PC-9 (cell line): ENCODE measurements at regions of chr11 and their contacts with region 1.

Region 1: DNA sequence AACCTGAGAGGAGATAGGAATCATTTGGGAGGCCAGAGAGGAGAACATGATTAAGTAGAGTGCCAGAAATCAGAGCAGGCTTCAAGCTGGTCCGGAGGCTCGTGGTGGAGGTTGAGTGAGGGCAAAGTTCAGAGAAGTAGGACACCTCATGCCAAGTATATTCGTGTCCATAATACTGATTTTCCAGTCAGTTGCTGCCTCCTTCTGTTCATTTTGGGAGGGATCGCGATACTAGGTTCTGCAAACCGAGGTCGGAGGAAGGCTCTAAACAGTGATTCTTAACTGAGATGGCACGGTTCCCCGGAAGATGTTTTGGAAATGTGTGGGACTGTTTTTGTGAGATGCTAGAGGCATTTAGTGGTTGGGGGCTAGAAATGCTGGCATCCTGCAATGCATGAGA is 13.6 kb upstream of the CD3E start:
- DNase-seq: peak; percentile 43 to 65
- H3K4me3 ChIP-seq: no peak overlapping the region
- H3K27ac ChIP-seq: no peak overlapping the region
- H3K4me1 ChIP-seq: peaks cover 33% of the 10 kb centered on the region
- H3K27me3 ChIP-seq: no peaks in the 10 kb centered on the region
- CTCF ChIP-seq: peak; percentile 68

Region 2: GRCh38 chr11:118198370-118198769 is 92.6 kb before region 1 on chr11:
- CTCF ChIA-PET with region 1: interaction called, 14 read pairs
- POLR2A ChIA-PET with region 1: no interaction called
- intact Hi-C with region 1: loop called (anchors 1 kb)
- DNase-seq: peak in 1 of 2 experiments; percentile 74
- H3K4me3 ChIP-seq: peak overlapping the region; percentile 44; the same call in 1 of the 2 replicates
- H3K27ac ChIP-seq: no peak overlapping the region
- H3K4me1 ChIP-seq: peaks cover 16% of the 10 kb centered on the region
- H3K27me3 ChIP-seq: no peaks in the 10 kb centered on the region
- CTCF ChIP-seq: peak; percentile 98

Region 3: GRCh38 chr11:118251858-118252652 is 38.9 kb before region 1 on chr11 and contains the start of gene MPZL3:
- CTCF ChIA-PET with region 1: no interaction called
- POLR2A ChIA-PET with region 1: no interaction called
- intact Hi-C with region 1: loop called (anchors 2 kb)
- DNase-seq: peak; percentile 86 to 99
- H3K4me3 ChIP-seq: peak within 1 kb of the TSS; percentile 72
- H3K27ac ChIP-seq: peak within 1 kb of the TSS; percentile 88
- H3K4me1 ChIP-seq: peaks cover 32% of the 10 kb centered on the region
- H3K27me3 ChIP-seq: no peaks in the 10 kb centered on the region
- CTCF ChIP-seq: 0 out of 2 replicates have a peak, but pooled peaks have one; percentile 2
- total RNA-seq, gene MPZL3: 13.4 and 16.8 TPM in 2 replicates

Region 4: GRCh38 chr11:118353084-118353710 is 62.3 kb after region 1 on chr11:
- CTCF ChIA-PET with region 1: no interaction called
- POLR2A ChIA-PET with region 1: no interaction called
- intact Hi-C with region 1: loop called (anchors 1 kb)
- DNase-seq: no peak
- H3K4me3 ChIP-seq: no peak overlapping the region
- H3K27ac ChIP-seq: no peak overlapping the region
- H3K4me1 ChIP-seq: peaks cover 21% of the 10 kb centered on the region
- H3K27me3 ChIP-seq: no peaks in the 10 kb centered on the region
- CTCF ChIP-seq: peak; percentile 86

Region 5: GRCh38 chr11:118565051-118565450 is 274.1 kb after region 1 on chr11:
- CTCF ChIA-PET with region 1: no interaction called
- POLR2A ChIA-PET with region 1: no interaction called
- intact Hi-C with region 1: loop called (anchors 1 kb)
- DNase-seq: peak in 1 of 2 experiments; percentile 16
- H3K4me3 ChIP-seq: no peak overlapping the region
- H3K27ac ChIP-seq: no peak overlapping the region
- H3K4me1 ChIP-seq: 0 out of 2 replicates have a peak, but pooled peaks cover 10% of the 10 kb centered on the region
- H3K27me3 ChIP-seq: no peaks in the 10 kb centered on the region
- CTCF ChIP-seq: no peak